ENCODE measurements at regions of chr1 and their contacts with region 1.

Region 1: DNA sequence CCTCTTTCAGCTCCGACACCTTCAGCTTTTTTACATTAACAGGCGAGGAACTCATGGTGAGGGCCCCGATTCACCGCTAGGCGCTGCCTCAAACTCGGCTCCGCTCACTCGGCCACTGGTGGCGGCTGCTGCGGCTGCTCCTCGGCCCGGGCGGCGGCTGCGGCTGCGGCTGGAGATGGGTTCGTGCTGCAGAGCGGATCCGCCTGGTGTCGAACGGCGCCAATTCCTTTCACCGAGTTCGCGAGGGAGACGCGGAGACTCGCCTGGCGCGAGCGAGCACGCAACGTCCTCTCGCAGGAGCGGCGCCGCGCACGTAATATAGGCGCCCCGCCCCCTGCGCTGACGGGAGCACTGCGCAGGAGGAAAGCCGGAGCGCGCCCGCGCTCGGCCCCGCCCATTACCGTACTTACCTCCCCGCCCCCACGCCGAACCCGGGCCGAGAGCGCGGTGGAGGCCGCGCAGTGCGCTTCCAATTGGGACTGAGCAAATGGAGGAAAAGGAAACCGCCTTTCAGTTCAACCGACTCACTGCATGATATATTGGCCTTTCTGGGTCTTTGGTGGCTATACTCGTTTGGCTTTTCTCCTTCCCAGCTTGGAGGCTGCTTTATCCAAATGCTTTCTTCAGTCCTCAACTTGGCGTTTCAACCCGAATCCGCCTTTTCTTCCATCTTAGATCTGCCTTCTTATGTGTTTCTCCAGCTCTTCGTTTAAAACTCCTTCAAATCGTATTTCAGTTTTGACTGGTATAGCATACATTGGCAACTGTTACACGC is at the start of gene HNRNPU:
- DNase-seq: peak; percentile 97
- ATAC-seq: peak; percentile 86
- H3K4me3 Mint-ChIP-seq: peak within 1 kb of the TSS; percentile 87
- H3K27ac Mint-ChIP-seq: peak within 1 kb of the TSS; percentile 99
- H3K4me1 Mint-ChIP-seq: peaks cover 48% of the 10 kb centered on the region
- H3K27me3 Mint-ChIP-seq: no peaks in the 10 kb centered on the region
- CTCF ChIP-seq: no peak; the same call in 1 of the 2 replicates
- total RNA-seq, gene HNRNPU: 477 to 536 TPM (median 477 TPM) in 3 replicates

Region 2: DNA sequence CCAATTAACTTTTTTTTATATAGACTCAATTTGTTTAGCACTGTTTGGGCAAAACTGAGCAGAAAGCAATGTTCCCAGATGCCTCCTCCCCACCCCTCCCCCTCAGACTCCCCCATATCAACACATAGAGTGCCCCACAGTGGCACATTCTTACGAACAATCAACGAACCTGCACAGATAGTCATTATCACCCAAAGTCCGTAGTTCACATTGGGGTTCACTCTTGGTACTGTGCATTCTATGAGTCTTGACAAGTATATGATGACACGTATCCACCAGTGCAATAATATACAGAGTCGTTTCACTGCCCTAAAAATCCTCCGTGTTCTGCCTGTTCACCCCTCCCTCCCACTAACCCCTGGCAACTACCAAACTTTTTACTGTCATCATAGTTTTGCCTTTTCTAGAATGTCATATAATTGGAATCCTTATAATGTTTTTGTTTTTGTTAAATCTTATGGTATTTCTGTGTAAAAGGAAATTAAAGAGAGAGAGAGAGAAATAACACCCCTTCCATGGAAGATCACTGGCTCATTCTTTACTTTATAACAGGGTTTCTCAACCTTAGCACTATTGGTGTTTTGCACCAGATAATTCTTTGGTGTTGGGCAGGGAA is 37.1 kb after region 1 on chr1:
- CTCF ChIA-PET with region 1: no interaction called
- POLR2A ChIA-PET with region 1: no interaction called
- DNase-seq: no peak
- ATAC-seq: no peak
- H3K4me3 Mint-ChIP-seq: no peak overlapping the region
- H3K27ac Mint-ChIP-seq: no peak overlapping the region
- H3K4me1 Mint-ChIP-seq: peaks cover 17% of the 10 kb centered on the region
- H3K27me3 Mint-ChIP-seq: no peaks in the 10 kb centered on the region
- CTCF ChIP-seq: no peak

Region 3: DNA sequence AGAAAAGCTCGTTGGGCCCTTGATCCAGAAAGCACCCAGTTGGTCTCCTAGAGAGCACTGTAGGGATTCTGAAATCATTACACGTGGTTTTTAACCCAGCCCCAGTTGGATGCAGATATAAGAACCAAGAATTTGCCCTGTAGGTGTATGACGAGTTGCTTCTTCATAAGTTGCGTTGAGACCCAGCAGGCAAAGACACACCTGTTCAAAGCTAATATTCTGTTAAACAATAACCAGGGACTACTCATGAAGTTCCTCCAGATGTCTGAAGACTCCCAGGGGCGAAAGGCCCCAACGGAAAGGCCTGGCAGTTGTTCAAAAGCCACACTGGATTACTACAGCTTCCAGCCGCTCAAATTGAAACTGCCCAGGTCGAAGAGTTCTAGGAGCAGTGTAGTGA is 88.5 kb after region 1 on chr1:
- CTCF ChIA-PET with region 1: no interaction called
- POLR2A ChIA-PET with region 1: no interaction called
- DNase-seq: no peak
- ATAC-seq: no peak
- H3K4me3 Mint-ChIP-seq: no peak overlapping the region
- H3K27ac Mint-ChIP-seq: no peak overlapping the region
- H3K4me1 Mint-ChIP-seq: 0 out of 2 replicates have a peak, but pooled peaks cover 3% of the 10 kb centered on the region
- H3K27me3 Mint-ChIP-seq: no peaks in the 10 kb centered on the region
- CTCF ChIP-seq: no peak

Region 4: DNA sequence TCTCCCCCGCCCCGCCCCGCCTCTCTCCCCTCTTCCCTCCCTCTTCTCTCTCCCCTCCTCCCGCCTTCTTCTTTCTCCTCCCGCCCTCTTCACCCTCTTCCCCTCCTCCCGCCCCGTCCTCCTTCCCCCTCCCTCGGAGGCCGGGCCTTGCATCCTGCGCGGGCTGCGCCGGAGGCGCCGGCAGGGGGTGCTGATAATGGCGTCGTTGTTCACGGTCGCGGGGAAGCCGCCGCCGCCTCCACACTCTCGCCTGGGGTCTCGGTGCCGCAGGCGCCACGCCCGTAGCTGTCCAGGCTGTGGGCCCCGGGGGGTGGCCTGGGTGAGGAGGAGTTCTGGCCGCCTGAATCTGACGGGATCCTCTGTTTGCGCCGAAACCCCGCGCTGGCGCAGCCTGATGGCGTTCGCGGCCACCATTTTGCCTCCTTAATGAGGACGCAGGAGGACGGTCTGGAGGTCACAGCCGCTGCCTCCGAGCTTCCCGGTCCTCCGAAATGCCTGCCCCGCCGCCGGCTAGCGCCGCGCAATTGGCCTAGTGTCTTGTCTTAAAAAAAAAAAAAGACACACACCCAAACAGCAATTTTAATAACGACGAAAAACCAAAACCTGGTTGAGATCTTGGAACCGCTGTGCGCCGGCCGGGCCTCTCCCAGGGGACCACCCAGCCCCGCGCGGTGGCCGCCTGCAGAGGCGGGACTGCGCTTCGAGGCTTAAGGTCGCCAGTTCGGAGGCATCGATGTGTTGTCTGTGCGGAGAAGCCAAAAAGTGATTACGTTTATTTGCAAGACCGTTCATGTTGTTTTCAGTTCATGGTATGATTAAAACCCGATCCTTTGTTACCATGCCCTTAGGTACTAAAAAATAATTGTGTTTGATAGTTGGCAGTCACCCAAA is 106.5 kb after region 1 on chr1:
- CTCF ChIA-PET with region 1: interaction called, 4 read pairs
- POLR2A ChIA-PET with region 1: interaction called, 17 read pairs
- DNase-seq: peak; percentile 94
- ATAC-seq: peak; percentile 68
- H3K4me3 Mint-ChIP-seq: peak overlapping the region; percentile 84
- H3K27ac Mint-ChIP-seq: peak overlapping the region; percentile 100
- H3K4me1 Mint-ChIP-seq: peaks cover 32% of the 10 kb centered on the region
- H3K27me3 Mint-ChIP-seq: no peaks in the 10 kb centered on the region
- CTCF ChIP-seq: 0 out of 2 replicates have a peak, but pooled peaks have one; percentile 21